Heart left ventricle (tissue), 16 donors: ENCODE measurements at regions of chr18 and their contacts with region 1.

Region 1: GRCh38 chr18:814300-815084 is 2.5 kb upstream of the YES1 start:
- DNase-seq: no peak
- ATAC-seq: no peak
- H3K4me3 ChIP-seq: no peak overlapping the region
- H3K27ac ChIP-seq: peak overlapping the region in 3 of 12 donors; percentile 91 to 97 (median 97)
- H3K4me1 ChIP-seq: peaks cover 0 to 31% (median 13%) of the 10 kb centered on the region in 12 donors
- H3K27me3 ChIP-seq: peaks cover 0 to 65% (median 0%) of the 10 kb centered on the region in 9 donors
- CTCF ChIP-seq: no peak
- POLR2A ChIP-seq: no peak

Region 2: GRCh38 chr18:741931-742512 is 72.5 kb before region 1 on chr18:
- intact Hi-C with region 1: loop called in 1 of 10 experiments (anchors 5 kb)
- DNase-seq: no peak
- ATAC-seq: peak; percentile 20 to 82 (median 74)
- H3K4me3 ChIP-seq: no peak overlapping the region
- H3K27ac ChIP-seq: peak overlapping the region in 1 of 12 donors; percentile 9
- H3K4me1 ChIP-seq: peaks cover 0 to 4% (median 0%) of the 10 kb centered on the region in 12 donors
- H3K27me3 ChIP-seq: no peaks in the 10 kb centered on the region
- CTCF ChIP-seq: peak; percentile 73 to 86 (median 79)
- POLR2A ChIP-seq: no peak

Region 3: DNA sequence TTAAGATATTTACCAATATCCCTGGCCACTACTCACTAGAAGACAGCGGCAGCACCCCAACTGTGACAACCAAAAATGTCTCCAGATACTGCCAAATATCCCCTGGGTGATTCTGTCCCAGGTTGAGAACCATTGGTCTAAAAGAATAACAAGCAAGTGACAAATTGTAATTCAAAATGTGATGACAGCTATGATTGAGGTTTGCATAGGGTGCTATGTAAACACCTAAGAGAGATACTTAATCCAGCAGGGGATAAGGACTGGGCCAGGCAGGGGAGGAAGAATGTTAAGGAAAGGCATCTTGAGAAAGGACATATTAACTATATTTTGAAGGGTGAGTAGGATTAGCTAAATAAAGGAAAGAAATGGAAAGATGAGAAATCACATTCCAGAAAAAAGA is 64.0 kb before region 1 on chr18:
- intact Hi-C with region 1: loop called in 2 of 10 experiments (anchors 5 kb)
- DNase-seq: no peak
- ATAC-seq: no peak
- H3K4me3 ChIP-seq: no peak overlapping the region
- H3K27ac ChIP-seq: no peak overlapping the region
- H3K4me1 ChIP-seq: no peaks in the 10 kb centered on the region
- H3K27me3 ChIP-seq: no peaks in the 10 kb centered on the region
- CTCF ChIP-seq: no peak
- POLR2A ChIP-seq: no peak

Region 4: DNA sequence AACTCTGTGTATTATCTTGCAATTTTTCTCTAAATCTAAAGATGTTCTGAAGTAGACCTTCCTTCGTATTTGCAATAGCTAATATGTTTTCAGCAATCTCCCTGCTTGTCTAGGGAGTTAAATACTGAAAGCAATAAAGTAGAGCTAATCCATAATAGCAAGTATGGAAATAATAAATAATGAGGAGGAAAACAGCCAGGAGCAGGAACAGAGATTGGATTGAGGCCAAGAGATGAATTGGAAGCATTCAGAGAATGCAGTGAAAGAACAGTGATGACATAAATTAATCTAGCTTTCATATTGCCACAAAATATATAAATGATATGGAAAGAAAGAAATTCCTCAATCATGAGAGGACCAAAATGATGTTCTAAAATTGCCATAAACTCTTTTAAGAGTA is 1077.1 kb after region 1 on chr18:
- intact Hi-C with region 1: no loop called
- DNase-seq: no peak
- ATAC-seq: no peak
- H3K4me3 ChIP-seq: no peak overlapping the region
- H3K27ac ChIP-seq: no peak overlapping the region
- H3K4me1 ChIP-seq: no peaks in the 10 kb centered on the region
- H3K27me3 ChIP-seq: no peaks in the 10 kb centered on the region
- CTCF ChIP-seq: no peak
- POLR2A ChIP-seq: no peak